ENCODE measurements at regions of chr9 and their contacts with region 1.

Region 1: GRCh38 chr9:127980706-127981558 is at the start of gene EEIG1:
- DNase-seq: peak; percentile 97
- ATAC-seq: peak; percentile 96
- total RNA-seq, gene EEIG1: 25.3 TPM

Region 2: DNA sequence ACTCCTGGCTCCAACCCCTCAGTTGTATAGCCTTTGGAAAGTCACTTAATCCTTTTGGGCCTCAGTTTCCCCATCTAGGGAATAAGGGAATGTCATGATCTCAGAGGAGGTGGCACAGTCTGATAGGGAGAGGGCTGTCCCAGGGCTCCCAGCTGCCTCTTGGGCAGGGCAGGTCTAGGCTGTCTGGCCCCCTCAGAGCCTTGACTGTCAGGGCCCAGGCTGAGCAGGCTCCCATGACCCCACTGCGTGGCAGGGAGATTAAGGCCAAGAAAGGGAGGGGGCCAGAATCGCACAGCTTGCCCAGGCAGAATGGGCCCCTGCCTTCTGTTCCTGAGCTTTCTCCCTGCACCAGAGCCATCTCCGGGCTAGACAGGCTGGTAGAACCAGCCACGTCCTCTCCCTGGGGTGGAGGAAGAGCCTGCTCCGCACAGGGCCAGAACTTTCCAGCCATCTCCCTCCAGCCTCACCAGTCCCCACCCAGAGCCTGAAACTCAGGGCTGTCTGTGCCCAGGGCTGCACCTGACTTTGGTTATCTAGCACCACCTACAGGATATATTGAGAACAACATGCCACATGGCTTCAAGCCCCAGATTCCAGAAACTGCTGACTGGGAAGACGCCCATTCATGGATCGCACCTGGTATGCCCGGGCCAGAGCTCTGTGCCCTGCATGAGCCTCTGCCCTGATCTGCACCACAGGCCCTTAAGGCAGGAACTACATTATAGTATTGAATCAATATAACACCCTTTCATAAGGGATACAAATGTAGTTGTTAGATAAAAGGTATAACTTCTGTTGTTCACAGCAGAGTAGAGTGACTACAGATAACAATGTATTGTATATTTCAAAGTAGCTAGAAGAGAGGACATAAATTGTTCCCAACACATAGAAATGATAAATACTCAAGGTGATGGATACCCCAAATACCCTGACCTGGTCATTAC is 54.2 kb after region 1 on chr9:
- intact Hi-C with region 1: loop called (anchors 5 kb)
- DNase-seq: peak; percentile 73
- ATAC-seq: peak; percentile 96

Region 3: DNA sequence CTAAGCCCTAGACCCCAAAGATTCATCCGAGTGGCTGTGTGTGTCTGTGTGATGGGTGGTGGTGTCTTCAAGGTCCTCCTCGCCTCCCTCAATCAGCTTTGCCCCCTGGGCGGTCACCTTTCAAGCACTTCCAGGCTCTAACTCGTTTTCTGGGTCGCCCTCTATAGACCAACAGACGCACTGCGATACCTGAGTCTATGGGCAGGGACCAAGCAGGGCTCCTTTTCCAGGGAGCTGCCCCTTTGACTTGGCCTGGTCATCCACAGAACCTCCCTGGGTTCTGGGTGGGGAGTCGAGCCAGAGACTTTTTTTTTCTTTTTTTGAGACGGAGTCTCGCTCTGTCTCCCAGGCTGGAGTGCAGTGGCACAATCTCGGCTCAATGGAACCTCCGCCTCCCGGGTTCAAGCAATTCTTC is 360.5 kb after region 1 on chr9:
- intact Hi-C with region 1: no loop called
- DNase-seq: peak; percentile 67
- ATAC-seq: peak; percentile 68